ENCODE measurements at regions of chr18 and their contacts with region 1.

Region 1: DNA sequence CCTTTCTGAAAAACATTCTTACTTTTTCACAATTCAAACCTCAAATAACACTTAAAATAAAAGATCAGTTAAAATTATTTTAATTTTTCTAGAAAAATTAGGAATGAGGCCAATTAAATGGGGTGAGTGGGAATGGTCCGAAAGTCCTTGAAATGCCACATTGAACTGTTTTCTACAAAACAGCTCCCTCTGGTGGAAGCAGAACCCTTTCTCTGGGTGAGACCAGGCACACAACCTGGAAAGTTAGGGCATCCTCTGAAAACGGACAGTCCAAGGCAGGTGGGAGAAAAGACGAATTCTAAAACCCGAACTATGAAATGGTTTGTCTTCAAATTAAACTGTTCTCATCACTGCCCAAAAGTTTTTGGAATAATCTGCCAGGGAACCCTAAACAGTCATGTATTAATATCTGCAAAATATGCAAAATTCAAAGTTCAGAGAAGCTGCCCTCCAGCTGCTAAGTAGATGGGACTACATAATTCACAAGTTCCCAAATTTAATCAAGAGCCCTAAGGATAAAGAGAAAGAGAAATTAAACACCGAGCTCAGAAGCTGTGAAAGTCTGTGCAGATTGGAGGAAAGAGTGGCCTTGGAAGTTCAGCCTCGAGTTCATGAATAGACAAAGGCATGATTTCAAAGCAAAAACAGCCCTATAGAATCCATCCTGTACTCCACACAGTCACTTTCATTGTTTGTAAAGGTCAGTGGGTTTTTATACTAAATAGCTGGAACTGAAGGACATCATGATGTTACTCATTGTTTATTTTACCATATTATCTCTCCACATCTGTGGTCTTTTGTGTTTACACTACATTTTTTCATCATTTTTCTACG is 108.3 kb downstream of the PIEZO2 start:
- DNase-seq: no peak
- H3K4me3 ChIP-seq: no peak overlapping the region
- H3K27ac ChIP-seq: no peak overlapping the region
- H3K4me1 ChIP-seq: no peaks in the 10 kb centered on the region
- H3K27me3 ChIP-seq: peaks cover 0 to 5% (median 0%) of the 10 kb centered on the region in 4 donors
- CTCF ChIP-seq: peak; percentile 51 to 72 (median 59)
- EP300 ChIP-seq: no peak
- POLR2A ChIP-seq: no peak

Region 2: GRCh38 chr18:10851824-10852319 is 189.2 kb before region 1 on chr18:
- intact Hi-C with region 1: loop called (anchors 2 kb)
- DNase-seq: no peak
- H3K4me3 ChIP-seq: no peak overlapping the region
- H3K27ac ChIP-seq: no peak overlapping the region
- H3K4me1 ChIP-seq: peaks cover 0 to 6% (median 0%) of the 10 kb centered on the region in 4 donors
- H3K27me3 ChIP-seq: peaks cover 0 to 9% (median 0%) of the 10 kb centered on the region in 4 donors
- CTCF ChIP-seq: peak; percentile 72 to 75 (median 74)
- EP300 ChIP-seq: no peak
- POLR2A ChIP-seq: no peak

Region 3: GRCh38 chr18:11324956-11325873 is 284.2 kb after region 1 on chr18:
- intact Hi-C with region 1: no loop called
- DNase-seq: no peak
- H3K4me3 ChIP-seq: no peak overlapping the region
- H3K27ac ChIP-seq: no peak overlapping the region
- H3K4me1 ChIP-seq: peaks cover 0 to 12% (median 5%) of the 10 kb centered on the region in 4 donors
- H3K27me3 ChIP-seq: no peaks in the 10 kb centered on the region
- CTCF ChIP-seq: no peak
- EP300 ChIP-seq: no peak
- POLR2A ChIP-seq: no peak

Region 4: DNA sequence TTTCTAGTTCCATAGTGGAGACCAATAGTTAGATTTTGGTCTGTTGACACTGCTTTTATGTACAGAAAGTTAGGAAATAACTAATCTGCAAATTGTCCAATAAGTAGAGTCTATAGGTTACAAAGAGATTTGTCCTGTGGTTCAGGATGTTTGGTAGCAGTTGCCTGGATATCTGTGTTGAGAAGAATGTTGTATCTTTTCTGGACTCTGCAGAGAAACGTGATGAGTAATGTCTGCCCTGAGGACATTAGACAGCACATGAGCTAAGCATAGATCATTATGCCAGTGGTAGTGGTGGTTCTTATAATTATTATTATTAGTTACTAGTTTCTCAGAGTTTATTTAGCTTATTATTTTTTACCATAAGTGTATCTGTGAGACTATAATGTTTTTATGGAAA is 1118.4 kb after region 1 on chr18:
- intact Hi-C with region 1: no loop called
- DNase-seq: no peak
- H3K4me3 ChIP-seq: no peak overlapping the region
- H3K27ac ChIP-seq: no peak overlapping the region
- H3K4me1 ChIP-seq: no peaks in the 10 kb centered on the region
- H3K27me3 ChIP-seq: no peaks in the 10 kb centered on the region
- CTCF ChIP-seq: no peak
- EP300 ChIP-seq: no peak
- POLR2A ChIP-seq: no peak

Measured in esophagus muscularis mucosa (tissue), 4 donors.